Activated B cell treated with CpG ODN at 0.5 μM for 24 hours (primary cell): ENCODE measurements at regions of chr16 and their contacts with region 1.

Region 1: GRCh38 chr16:83215406-83216001 is 588.7 kb downstream of the CDH13 start:
- DNase-seq: no peak
- ATAC-seq: no peak
- H3K4me3 Mint-ChIP-seq: no peak overlapping the region
- H3K27ac Mint-ChIP-seq: no peak overlapping the region
- H3K4me1 Mint-ChIP-seq: no peaks in the 10 kb centered on the region
- H3K27me3 Mint-ChIP-seq: no peaks in the 10 kb centered on the region
- CTCF ChIP-seq: no peak

Region 2: GRCh38 chr16:82263521-82264143 is 951.9 kb before region 1 on chr16:
- CTCF ChIA-PET with region 1: interaction called, 19 read pairs
- POLR2A ChIA-PET with region 1: no interaction called
- intact Hi-C with region 1: no loop called
- DNase-seq: no peak
- ATAC-seq: peak; percentile 60
- H3K4me3 Mint-ChIP-seq: no peak overlapping the region
- H3K27ac Mint-ChIP-seq: no peak overlapping the region
- H3K4me1 Mint-ChIP-seq: no peaks in the 10 kb centered on the region
- H3K27me3 Mint-ChIP-seq: peaks cover 8% of the 10 kb centered on the region
- CTCF ChIP-seq: no peak

Region 3: GRCh38 chr16:82630688-82631087 is 584.8 kb before region 1 on chr16:
- CTCF ChIA-PET with region 1: no interaction called
- POLR2A ChIA-PET with region 1: no interaction called
- intact Hi-C with region 1: loop called (anchors 5 kb)
- DNase-seq: no peak
- ATAC-seq: no peak
- H3K4me3 Mint-ChIP-seq: no peak overlapping the region
- H3K27ac Mint-ChIP-seq: no peak overlapping the region
- H3K4me1 Mint-ChIP-seq: no peaks in the 10 kb centered on the region
- H3K27me3 Mint-ChIP-seq: peaks cover 34% of the 10 kb centered on the region
- CTCF ChIP-seq: no peak

Region 4: GRCh38 chr16:83271970-83272575 is 56.6 kb after region 1 on chr16:
- CTCF ChIA-PET with region 1: no interaction called
- POLR2A ChIA-PET with region 1: no interaction called
- intact Hi-C with region 1: no loop called
- DNase-seq: no peak
- ATAC-seq: no peak
- H3K4me3 Mint-ChIP-seq: no peak overlapping the region
- H3K27ac Mint-ChIP-seq: no peak overlapping the region
- H3K4me1 Mint-ChIP-seq: no peaks in the 10 kb centered on the region
- H3K27me3 Mint-ChIP-seq: peaks cover 4% of the 10 kb centered on the region
- CTCF ChIP-seq: no peak